Caco-2 (cell line): ENCODE measurements at regions of chr10 and their contacts with region 1.

Region 1: DNA sequence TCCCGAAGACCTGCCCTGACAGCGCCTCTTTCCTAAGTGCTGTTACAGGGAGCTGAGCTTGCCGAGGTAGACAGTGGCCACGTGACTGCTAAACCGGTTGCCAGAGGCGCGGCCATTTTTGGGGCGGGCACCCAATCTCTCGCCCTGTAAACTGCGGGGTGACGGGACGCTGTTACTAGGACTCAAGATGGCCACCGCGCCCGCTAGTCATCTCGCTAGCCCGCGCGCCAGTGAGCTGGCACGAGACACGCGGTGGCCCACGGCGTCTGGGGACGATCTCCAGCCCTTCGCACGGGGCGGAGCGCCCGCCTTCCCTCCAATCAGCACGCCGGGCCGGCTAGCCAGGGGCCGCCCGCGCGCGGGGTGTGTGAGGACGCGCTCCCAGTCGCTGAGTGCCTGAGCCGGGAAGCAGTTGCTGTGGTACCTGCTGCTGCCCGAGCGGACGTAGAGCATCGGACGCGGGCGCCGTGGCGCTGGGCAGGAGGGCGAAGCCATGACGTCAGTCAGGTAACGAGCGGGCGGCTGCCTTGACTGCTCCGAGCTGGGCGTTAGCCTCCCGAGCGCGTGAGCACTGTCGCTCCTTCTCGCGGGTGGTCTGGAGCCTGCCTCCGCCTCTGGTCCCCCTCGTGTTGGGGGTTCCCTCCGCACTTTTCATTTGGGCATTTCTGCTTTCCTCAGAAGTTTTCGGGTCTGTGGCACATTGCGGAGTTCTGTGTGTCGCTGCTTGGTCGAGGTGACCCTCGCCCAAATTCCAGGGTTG is 25.5 kb downstream of the ADK start:
- DNase-seq: peak; percentile 97
- H3K4me3 ChIP-seq: peak overlapping the region; percentile 63
- H3K4me3 Mint-ChIP-seq: peak overlapping the region; percentile 92
- H3K27ac Mint-ChIP-seq: peak overlapping the region; percentile 93
- H3K4me1 ChIP-seq: peaks cover 34% of the 10 kb centered on the region
- H3K4me1 Mint-ChIP-seq: peaks cover 14% of the 10 kb centered on the region
- H3K27me3 ChIP-seq: no peaks in the 10 kb centered on the region
- H3K27me3 Mint-ChIP-seq: no peaks in the 10 kb centered on the region
- CTCF ChIP-seq: no peak

Region 2: GRCh38 chr10:74151056-74151878 is 25.3 kb before region 1 on chr10 and contains the start of gene ADK:
- CTCF ChIA-PET with region 1: interaction called, 7 read pairs
- POLR2A ChIA-PET with region 1: interaction called, 18 read pairs
- intact Hi-C with region 1: loop called (anchors 1 kb)
- DNase-seq: peak; percentile 99
- H3K4me3 ChIP-seq: peak within 1 kb of the TSS; percentile 80
- H3K4me3 Mint-ChIP-seq: no peak within 1 kb of the TSS
- H3K27ac Mint-ChIP-seq: no peak within 1 kb of the TSS
- H3K4me1 ChIP-seq: peaks cover 14% of the 10 kb centered on the region
- H3K4me1 Mint-ChIP-seq: peaks cover 28% of the 10 kb centered on the region
- H3K27me3 ChIP-seq: no peaks in the 10 kb centered on the region
- H3K27me3 Mint-ChIP-seq: no peaks in the 10 kb centered on the region
- CTCF ChIP-seq: peak in 1 of 2 experiments; percentile 29
- total RNA-seq, gene ADK: 96.4 and 105 TPM in 2 replicates

Region 3: GRCh38 chr10:74165530-74165901 is 11.0 kb before region 1 on chr10:
- CTCF ChIA-PET with region 1: no interaction called
- POLR2A ChIA-PET with region 1: interaction called, 13 read pairs
- intact Hi-C with region 1: no loop called
- DNase-seq: no peak
- H3K4me3 ChIP-seq: no peak overlapping the region
- H3K4me3 Mint-ChIP-seq: peak overlapping the region; percentile 66
- H3K27ac Mint-ChIP-seq: peak overlapping the region; percentile 92
- H3K4me1 ChIP-seq: peaks cover 44% of the 10 kb centered on the region
- H3K4me1 Mint-ChIP-seq: peaks cover 19% of the 10 kb centered on the region
- H3K27me3 ChIP-seq: no peaks in the 10 kb centered on the region
- H3K27me3 Mint-ChIP-seq: no peaks in the 10 kb centered on the region
- CTCF ChIP-seq: no peak

Region 4: GRCh38 chr10:74189999-74190421 is 13.4 kb after region 1 on chr10:
- CTCF ChIA-PET with region 1: interaction called, 6 read pairs
- POLR2A ChIA-PET with region 1: interaction called, 14 read pairs
- intact Hi-C with region 1: loop called (anchors 1 kb)
- DNase-seq: peak; percentile 55 to 64
- H3K4me3 ChIP-seq: no peak overlapping the region
- H3K4me3 Mint-ChIP-seq: peak overlapping the region; percentile 65
- H3K27ac Mint-ChIP-seq: peak overlapping the region; percentile 95
- H3K4me1 ChIP-seq: peaks cover 15% of the 10 kb centered on the region
- H3K4me1 Mint-ChIP-seq: peaks cover 43% of the 10 kb centered on the region
- H3K27me3 ChIP-seq: no peaks in the 10 kb centered on the region
- H3K27me3 Mint-ChIP-seq: no peaks in the 10 kb centered on the region
- CTCF ChIP-seq: no peak

Region 5: DNA sequence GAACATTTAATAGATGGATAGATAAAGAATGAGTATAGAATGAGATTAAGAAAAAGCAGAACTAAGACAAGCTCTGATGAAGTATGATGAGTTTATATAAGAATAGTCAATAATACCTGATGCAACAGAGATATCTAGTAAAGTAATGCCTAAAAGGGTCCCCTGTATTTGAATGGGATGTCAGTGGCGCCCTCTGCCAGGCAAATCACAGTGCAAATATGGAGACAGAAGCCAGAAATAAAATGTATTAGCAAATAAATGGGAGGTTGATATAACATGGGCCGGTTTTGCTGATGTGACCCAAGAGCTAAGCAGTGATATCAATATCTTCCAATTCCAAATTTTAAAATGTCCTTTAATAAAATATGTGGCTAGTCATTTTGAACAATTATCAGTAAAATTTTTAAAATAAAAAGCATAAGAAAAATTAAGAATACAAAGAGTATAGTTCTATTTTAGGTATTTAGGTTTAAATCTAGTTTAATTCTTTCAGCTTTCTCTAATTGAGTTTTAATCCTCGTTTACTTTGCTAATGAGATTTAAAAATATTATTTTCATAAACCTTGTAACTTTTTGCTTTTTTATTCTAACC is 37.1 kb after region 1 on chr10:
- CTCF ChIA-PET with region 1: no interaction called
- POLR2A ChIA-PET with region 1: interaction called, 5 read pairs
- intact Hi-C with region 1: loop called (anchors 5 kb)
- DNase-seq: peak; percentile 45 to 60
- H3K4me3 ChIP-seq: no peak overlapping the region
- H3K4me3 Mint-ChIP-seq: no peak overlapping the region
- H3K27ac Mint-ChIP-seq: no peak overlapping the region
- H3K4me1 ChIP-seq: no peaks in the 10 kb centered on the region
- H3K4me1 Mint-ChIP-seq: no peaks in the 10 kb centered on the region
- H3K27me3 ChIP-seq: no peaks in the 10 kb centered on the region
- H3K27me3 Mint-ChIP-seq: no peaks in the 10 kb centered on the region
- CTCF ChIP-seq: peak in 1 of 2 experiments; percentile 70

Region 6: GRCh38 chr10:74439213-74439612 is 262.7 kb after region 1 on chr10:
- CTCF ChIA-PET with region 1: no interaction called
- POLR2A ChIA-PET with region 1: interaction called, 12 read pairs
- intact Hi-C with region 1: no loop called
- DNase-seq: no peak
- H3K4me3 ChIP-seq: no peak overlapping the region
- H3K4me3 Mint-ChIP-seq: no peak overlapping the region
- H3K27ac Mint-ChIP-seq: no peak overlapping the region
- H3K4me1 ChIP-seq: no peaks in the 10 kb centered on the region
- H3K4me1 Mint-ChIP-seq: peaks cover 9% of the 10 kb centered on the region
- H3K27me3 ChIP-seq: no peaks in the 10 kb centered on the region
- H3K27me3 Mint-ChIP-seq: no peaks in the 10 kb centered on the region
- CTCF ChIP-seq: no peak